PC-9 (cell line): ENCODE measurements at regions of chr7 and their contacts with region 1.

Region 1: GRCh38 chr7:122886357-122887081 is at the start of gene CADPS2:
- DNase-seq: peak; percentile 77 to 92
- H3K4me3 ChIP-seq: peak within 1 kb of the TSS; percentile 92
- H3K27ac ChIP-seq: peak within 1 kb of the TSS; percentile 51
- H3K4me1 ChIP-seq: peaks cover 19% of the 10 kb centered on the region
- H3K27me3 ChIP-seq: no peaks in the 10 kb centered on the region
- CTCF ChIP-seq: no peak
- total RNA-seq, gene CADPS2: 9.9 and 11.9 TPM in 2 replicates

Region 2: DNA sequence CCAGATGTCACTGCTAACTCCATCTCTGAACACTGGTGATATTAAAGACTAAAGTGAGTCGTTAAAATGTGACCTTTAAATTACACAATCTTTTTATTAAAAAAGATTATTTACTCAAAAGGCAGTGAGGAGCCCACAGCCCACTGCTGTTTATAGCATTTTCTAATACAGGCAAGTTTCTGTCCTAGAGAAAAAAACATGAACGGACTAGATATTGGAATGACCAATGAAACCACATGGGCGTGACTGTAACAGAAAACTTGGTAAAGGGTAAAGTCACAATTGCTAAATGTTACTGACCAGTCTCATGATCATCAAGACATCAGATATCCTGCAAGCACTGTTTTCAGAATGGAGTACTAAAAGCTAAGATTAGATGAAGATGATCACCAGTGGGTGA is 660.6 kb before region 1 on chr7:
- CTCF ChIA-PET with region 1: no interaction called
- POLR2A ChIA-PET with region 1: no interaction called
- intact Hi-C with region 1: loop called (anchors 10 kb)
- DNase-seq: no peak
- H3K4me3 ChIP-seq: no peak overlapping the region
- H3K27ac ChIP-seq: no peak overlapping the region
- H3K4me1 ChIP-seq: no peaks in the 10 kb centered on the region
- H3K27me3 ChIP-seq: no peaks in the 10 kb centered on the region
- CTCF ChIP-seq: no peak

Region 3: GRCh38 chr7:122803323-122803722 is 83.2 kb before region 1 on chr7:
- CTCF ChIA-PET with region 1: interaction called, 11 read pairs
- POLR2A ChIA-PET with region 1: interaction called, 4 read pairs
- intact Hi-C with region 1: loop called (anchors 5 kb)
- DNase-seq: peak in 1 of 2 experiments; percentile 21
- H3K4me3 ChIP-seq: no peak overlapping the region
- H3K27ac ChIP-seq: no peak overlapping the region
- H3K4me1 ChIP-seq: no peaks in the 10 kb centered on the region
- H3K27me3 ChIP-seq: no peaks in the 10 kb centered on the region
- CTCF ChIP-seq: peak; percentile 62

Region 4: DNA sequence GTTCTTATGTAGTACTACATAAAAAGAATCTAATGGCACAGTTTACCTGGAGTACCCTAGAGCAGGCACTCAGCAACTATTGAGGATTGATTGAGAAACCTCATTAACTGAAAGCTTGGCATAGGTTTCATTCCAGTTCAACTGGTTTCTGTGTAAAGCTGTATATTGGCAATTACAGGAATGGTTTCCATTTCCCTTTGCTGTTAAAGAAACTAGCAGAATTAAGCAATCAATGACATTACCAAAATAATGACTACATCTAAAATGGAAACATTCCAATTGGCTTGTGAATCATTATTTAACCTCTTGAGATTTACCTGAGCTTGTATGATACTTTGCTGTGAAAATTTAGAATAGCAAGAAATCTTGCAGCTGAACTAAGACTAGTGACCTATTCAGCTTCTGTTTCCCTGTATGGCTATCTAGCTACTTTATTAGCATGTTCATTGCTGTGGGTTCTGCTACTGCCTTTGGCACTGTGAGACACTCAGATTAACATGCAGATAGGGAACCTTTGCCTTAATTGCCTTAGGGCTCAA is 33.2 kb after region 1 on chr7:
- CTCF ChIA-PET with region 1: no interaction called
- POLR2A ChIA-PET with region 1: interaction called, 13 read pairs
- intact Hi-C with region 1: no loop called
- DNase-seq: peak in 1 of 2 experiments; percentile 90
- H3K4me3 ChIP-seq: peak overlapping the region; percentile 22; the same call in 1 of the 2 replicates
- H3K27ac ChIP-seq: peak overlapping the region; percentile 64
- H3K4me1 ChIP-seq: peaks cover 30% of the 10 kb centered on the region
- H3K27me3 ChIP-seq: no peaks in the 10 kb centered on the region
- CTCF ChIP-seq: no peak

Region 5: GRCh38 chr7:123367484-123368122 is 481.1 kb after region 1 on chr7:
- CTCF ChIA-PET with region 1: no interaction called
- POLR2A ChIA-PET with region 1: no interaction called
- intact Hi-C with region 1: loop called (anchors 10 kb)
- DNase-seq: peak in 1 of 2 experiments; percentile 15
- H3K4me3 ChIP-seq: no peak overlapping the region
- H3K27ac ChIP-seq: no peak overlapping the region
- H3K4me1 ChIP-seq: no peaks in the 10 kb centered on the region
- H3K27me3 ChIP-seq: no peaks in the 10 kb centered on the region
- CTCF ChIP-seq: peak; percentile 81